ENCODE measurements at regions of chr6 and their contacts with region 1.

Region 1: GRCh38 chr6:3456755-3457466 is at the start of gene SLC22A23:
- DNase-seq: peak; percentile 72 to 80
- ATAC-seq: peak; percentile 71 to 72
- H3K4me3 ChIP-seq: peak within 1 kb of the TSS; percentile 71 to 83 (median 74)
- H3K27ac ChIP-seq: peak within 1 kb of the TSS; percentile 82 to 89 (median 85)
- H3K4me1 ChIP-seq: peaks cover 22 to 33% of the 10 kb centered on the region in 2 donors
- H3K27me3 ChIP-seq: no peaks in the 10 kb centered on the region
- CTCF ChIP-seq: peak; percentile 39 to 98 (median 71)
- POLR2A ChIP-seq: peak; percentile 62 to 73
- total RNA-seq, gene SLC22A23: 6.6 to 25.0 (median 14.6) TPM

Region 2: GRCh38 chr6:3281631-3282475 is 175.1 kb before region 1 on chr6:
- in situ Hi-C with region 1: loop called (anchors 25 kb)
- intact Hi-C with region 1: loop called (anchors 1 kb)
- DNase-seq: peak; percentile 56 to 78
- ATAC-seq: peak; percentile 86 to 87
- H3K4me3 ChIP-seq: no peak overlapping the region
- H3K27ac ChIP-seq: peak overlapping the region; percentile 28 to 75 (median 67)
- H3K4me1 ChIP-seq: peaks cover 20 to 28% of the 10 kb centered on the region in 2 donors
- H3K27me3 ChIP-seq: no peaks in the 10 kb centered on the region
- CTCF ChIP-seq: no peak
- POLR2A ChIP-seq: no peak

Region 3: GRCh38 chr6:3294921-3295871 is 161.7 kb before region 1 on chr6:
- in situ Hi-C with region 1: loop called (anchors 25 kb)
- intact Hi-C with region 1: loop called (anchors 5 kb)
- DNase-seq: peak; percentile 91 to 93
- ATAC-seq: peak; percentile 96 to 97
- H3K4me3 ChIP-seq: no peak overlapping the region
- H3K27ac ChIP-seq: peak overlapping the region; percentile 56 to 72 (median 63)
- H3K4me1 ChIP-seq: peaks cover 7 to 12% of the 10 kb centered on the region in 2 donors
- H3K27me3 ChIP-seq: no peaks in the 10 kb centered on the region
- CTCF ChIP-seq: peak; percentile 44 to 61 (median 51)
- POLR2A ChIP-seq: no peak

Region 4: DNA sequence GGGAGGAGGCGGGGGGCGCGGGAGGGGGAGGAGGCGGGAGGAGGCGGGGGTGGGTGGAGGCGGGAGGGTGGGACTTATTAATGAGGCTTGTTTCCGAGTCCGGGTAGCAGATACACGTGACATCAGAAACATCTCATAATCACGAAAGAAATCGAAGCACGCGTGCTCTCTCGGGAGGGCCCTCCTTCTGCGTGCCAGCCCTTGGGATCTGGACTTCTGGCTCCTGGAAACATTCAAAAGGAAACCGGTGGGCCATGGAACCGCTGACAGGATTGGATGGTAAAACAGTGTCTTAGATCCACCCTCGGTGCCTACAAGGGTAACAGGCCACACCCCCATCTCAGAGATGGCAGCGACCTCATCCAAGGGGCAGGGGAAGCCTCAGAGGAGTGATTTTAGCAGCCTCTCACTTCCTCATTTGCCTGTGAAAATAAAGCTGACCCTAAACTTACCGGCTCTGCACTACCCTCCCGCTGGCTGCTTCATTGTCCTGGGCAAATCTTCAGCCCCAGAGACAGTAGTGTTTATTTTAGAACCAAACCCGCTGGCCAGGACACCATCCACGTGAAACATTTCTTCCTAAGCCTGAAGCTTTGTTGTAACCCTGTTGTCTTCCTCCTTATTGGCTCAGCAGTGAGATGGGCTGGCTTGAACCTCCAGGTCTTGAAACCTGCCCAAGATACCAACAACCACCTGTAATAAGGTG is 100.7 kb before region 1 on chr6:
- in situ Hi-C with region 1: no loop called
- intact Hi-C with region 1: loop called (anchors 5 kb)
- DNase-seq: peak; percentile 64 to 79
- ATAC-seq: peak; percentile 79 to 82
- H3K4me3 ChIP-seq: peak overlapping the region; percentile 47 to 60 (median 55)
- H3K27ac ChIP-seq: peak overlapping the region; percentile 92 to 97 (median 95)
- H3K4me1 ChIP-seq: peaks cover 30 to 34% of the 10 kb centered on the region in 2 donors
- H3K27me3 ChIP-seq: no peaks in the 10 kb centered on the region
- CTCF ChIP-seq: no peak
- POLR2A ChIP-seq: peak in 1 of 2 donors; percentile 44

Region 5: DNA sequence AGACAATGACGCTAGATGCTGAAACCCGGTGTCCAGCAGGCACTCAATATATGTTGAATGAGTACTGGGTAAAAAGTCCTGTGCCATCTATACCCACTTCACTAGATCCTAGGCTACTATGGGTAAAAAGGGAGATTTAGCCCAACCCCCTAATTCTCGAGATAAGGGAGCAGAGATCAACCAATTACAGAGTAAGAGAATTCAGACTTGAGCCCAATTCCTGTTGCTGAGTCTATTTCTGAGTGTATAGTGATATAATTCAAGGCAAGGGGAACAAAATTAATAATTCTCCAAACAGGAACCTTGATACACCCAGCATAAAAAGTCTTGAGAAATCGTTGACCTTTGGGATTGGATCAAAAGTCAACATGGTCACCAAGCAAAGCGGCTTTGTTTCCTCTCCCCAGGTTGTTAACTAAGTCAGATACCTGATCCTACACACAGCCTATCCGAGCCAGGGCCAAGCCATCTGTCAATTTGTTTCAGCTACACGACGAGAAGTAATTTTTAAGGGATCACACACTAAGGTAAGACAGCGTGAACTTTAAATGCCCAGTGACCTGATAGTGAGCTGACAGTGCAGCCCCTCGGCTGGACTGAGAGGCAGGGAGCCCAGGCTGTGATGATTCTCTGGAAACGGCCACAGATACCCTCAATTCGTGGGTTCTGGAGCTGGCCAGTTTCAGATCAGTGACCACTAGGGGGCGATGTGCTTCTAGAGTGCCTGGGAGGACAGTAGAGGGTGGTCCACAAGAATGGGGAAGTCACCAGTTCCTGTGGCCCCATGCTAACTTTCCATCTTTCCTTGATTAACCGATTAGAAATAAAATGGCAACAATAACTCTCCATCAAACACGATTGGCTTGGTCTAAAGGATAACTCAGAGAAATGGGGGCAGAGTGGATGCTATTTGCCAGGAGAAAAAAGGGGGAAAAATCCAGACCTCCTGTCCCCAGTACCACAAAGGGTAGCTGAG is 46.2 kb before region 1 on chr6:
- in situ Hi-C with region 1: no loop called
- intact Hi-C with region 1: loop called (anchors 2 kb)
- DNase-seq: peak in 1 of 2 donors; percentile 18
- ATAC-seq: no peak
- H3K4me3 ChIP-seq: no peak overlapping the region
- H3K27ac ChIP-seq: no peak overlapping the region
- H3K4me1 ChIP-seq: peaks cover 13 to 15% of the 10 kb centered on the region in 2 donors
- H3K27me3 ChIP-seq: no peaks in the 10 kb centered on the region
- CTCF ChIP-seq: peak; percentile 32 to 73 (median 65)
- POLR2A ChIP-seq: no peak

Region 6: DNA sequence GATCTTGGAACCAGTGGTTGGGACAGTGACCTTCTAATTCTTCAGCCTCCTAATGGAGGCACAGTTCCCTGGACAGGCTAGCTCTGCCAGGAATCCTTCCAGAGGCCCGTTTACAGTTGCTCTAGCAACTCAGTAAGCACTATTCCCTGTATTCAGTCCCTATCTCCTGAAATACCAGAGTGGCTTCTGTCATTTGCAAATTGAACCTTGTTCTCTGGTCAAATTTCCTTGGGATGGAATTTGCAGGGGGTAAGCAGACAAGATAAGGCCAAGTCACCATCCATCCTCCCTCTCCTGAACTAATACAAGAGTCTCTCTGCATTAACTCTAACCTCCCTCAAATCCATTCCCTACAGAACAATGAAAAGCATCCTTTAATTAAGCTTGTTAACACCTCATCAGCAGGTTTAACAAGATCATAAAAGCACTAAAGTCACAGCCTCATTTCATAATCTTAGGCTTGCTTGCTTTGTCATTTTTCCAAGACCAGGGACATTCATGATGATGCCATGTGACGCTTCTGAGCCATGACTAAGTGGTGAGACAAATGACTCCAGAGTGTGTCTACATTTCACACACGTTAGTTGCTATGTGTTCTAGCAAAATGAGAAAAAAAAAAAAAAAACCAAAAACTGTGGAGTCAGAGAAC is 37.2 kb before region 1 on chr6:
- in situ Hi-C with region 1: no loop called
- intact Hi-C with region 1: loop called (anchors 2 kb)
- DNase-seq: peak; percentile 50 to 60
- ATAC-seq: peak; percentile 92 to 98
- H3K4me3 ChIP-seq: no peak overlapping the region
- H3K27ac ChIP-seq: peak overlapping the region; percentile 45 to 63 (median 54)
- H3K4me1 ChIP-seq: peaks cover 25 to 30% of the 10 kb centered on the region in 2 donors
- H3K27me3 ChIP-seq: no peaks in the 10 kb centered on the region
- CTCF ChIP-seq: no peak
- POLR2A ChIP-seq: no peak

Region 7: GRCh38 chr6:3732345-3733141 is 275.6 kb after region 1 on chr6:
- in situ Hi-C with region 1: no loop called
- intact Hi-C with region 1: loop called (anchors 1 kb)
- DNase-seq: peak; percentile 47 to 66
- ATAC-seq: peak; percentile 75 to 90
- H3K4me3 ChIP-seq: no peak overlapping the region
- H3K27ac ChIP-seq: no peak overlapping the region
- H3K4me1 ChIP-seq: no peaks in the 10 kb centered on the region
- H3K27me3 ChIP-seq: no peaks in the 10 kb centered on the region
- CTCF ChIP-seq: peak; percentile 67 to 92 (median 83)
- POLR2A ChIP-seq: no peak

Measured in gastrocnemius medialis (tissue), 4 donors.